GM12878 (cell line): ENCODE measurements at regions of chrX and their contacts with region 1.

Region 1: DNA sequence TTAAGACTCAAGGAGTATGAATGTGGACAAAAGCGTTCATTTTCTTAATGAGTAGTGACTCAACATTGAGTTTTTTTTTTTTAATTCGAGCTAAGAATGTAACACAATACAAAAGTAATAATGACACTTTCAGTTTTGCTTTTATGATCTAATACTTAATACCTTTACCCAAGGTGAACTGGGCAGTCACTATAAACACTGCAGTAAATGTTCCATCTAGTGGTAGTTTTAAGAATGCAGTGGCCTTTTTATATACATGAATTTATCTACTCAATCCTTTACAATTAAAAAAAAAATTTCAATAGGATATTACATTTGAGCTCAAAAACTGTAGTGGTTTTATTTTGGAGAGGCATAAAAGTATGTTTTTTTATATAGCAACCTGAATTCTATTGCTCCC is 33.9 kb downstream of the PDK3 start:
- DNase-seq: no peak
- ATAC-seq: peak; percentile 88
- H3K4me3 ChIP-seq: no peak overlapping the region
- H3K27ac ChIP-seq: no peak overlapping the region
- H3K4me1 ChIP-seq: peaks cover 3% of the 10 kb centered on the region; the same call in 1 of the 2 replicates
- H3K27me3 ChIP-seq: no peaks in the 10 kb centered on the region
- CTCF ChIP-seq: peak; percentile 42 to 55 (median 49); a peak in 5 of 6 replicates
- EP300 ChIP-seq: no peak
- POLR2A ChIP-seq: no peak
- RAD21 ChIP-seq: peak; percentile 60

Region 2: DNA sequence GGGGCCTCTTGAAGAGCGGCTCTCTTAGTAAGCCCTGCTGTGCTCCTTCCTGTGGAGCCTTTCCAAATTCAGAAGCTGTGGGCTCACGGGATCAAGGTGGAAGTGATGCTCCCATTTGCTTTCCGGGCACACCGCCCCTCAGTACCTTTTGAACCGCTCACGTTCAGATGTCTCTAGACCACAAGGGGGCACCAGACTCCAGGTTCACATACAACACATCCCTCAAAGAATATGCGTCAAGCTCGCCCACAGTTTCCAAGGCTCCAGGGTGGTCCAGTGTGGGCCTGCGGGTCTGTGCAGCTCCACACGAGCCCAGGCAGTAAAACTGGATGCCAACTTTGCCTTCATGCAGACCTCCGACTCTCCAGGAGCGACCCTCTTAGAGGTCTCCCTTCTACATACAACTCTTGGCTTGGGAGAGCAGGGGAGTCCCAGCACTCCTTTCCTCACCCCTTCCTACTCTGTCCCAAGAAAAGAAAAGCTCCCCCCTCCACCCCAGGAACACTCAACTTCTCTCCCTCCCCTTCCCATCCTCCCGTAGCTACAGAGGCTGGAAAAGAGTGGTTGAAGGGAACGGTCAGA is 127.5 kb before region 1 on chrX:
- CTCF ChIA-PET with region 1: interaction called, 31 read pairs
- POLR2A ChIA-PET with region 1: no interaction called
- RAD21 ChIA-PET with region 1: no interaction called
- SMC1A ChIA-PET with region 1: no interaction called
- in situ Hi-C with region 1: no loop called
- intact Hi-C with region 1: loop called (anchors 2 kb)
- DNase-seq: peak; percentile 8
- ATAC-seq: peak; percentile 97
- H3K4me3 ChIP-seq: no peak overlapping the region
- H3K27ac ChIP-seq: no peak overlapping the region
- H3K4me1 ChIP-seq: no peaks in the 10 kb centered on the region
- H3K27me3 ChIP-seq: peaks cover 0 to 2% of the 10 kb centered on the region in 2 experiments; a peak in 1 of 4 replicates
- CTCF ChIP-seq: peak; percentile 72 to 79 (median 73)
- EP300 ChIP-seq: no peak
- POLR2A ChIP-seq: no peak
- RAD21 ChIP-seq: peak; percentile 70

Region 3: GRCh38 chrX:24395775-24396174 is 103.2 kb before region 1 on chrX:
- CTCF ChIA-PET with region 1: interaction called, 147 read pairs
- POLR2A ChIA-PET with region 1: interaction called, 10 read pairs
- RAD21 ChIA-PET with region 1: interaction called, 59 read pairs
- SMC1A ChIA-PET with region 1: interaction called, 92 read pairs
- in situ Hi-C with region 1: loop called (anchors 5 kb)
- intact Hi-C with region 1: loop called (anchors 1 kb)
- DNase-seq: peak; percentile 51
- ATAC-seq: peak; percentile 94
- H3K4me3 ChIP-seq: no peak overlapping the region
- H3K27ac ChIP-seq: no peak overlapping the region
- H3K4me1 ChIP-seq: no peaks in the 10 kb centered on the region
- H3K27me3 ChIP-seq: no peaks in the 10 kb centered on the region
- CTCF ChIP-seq: peak; percentile 77 to 91 (median 85)
- EP300 ChIP-seq: no peak
- POLR2A ChIP-seq: no peak
- RAD21 ChIP-seq: peak; percentile 98

Region 4: DNA sequence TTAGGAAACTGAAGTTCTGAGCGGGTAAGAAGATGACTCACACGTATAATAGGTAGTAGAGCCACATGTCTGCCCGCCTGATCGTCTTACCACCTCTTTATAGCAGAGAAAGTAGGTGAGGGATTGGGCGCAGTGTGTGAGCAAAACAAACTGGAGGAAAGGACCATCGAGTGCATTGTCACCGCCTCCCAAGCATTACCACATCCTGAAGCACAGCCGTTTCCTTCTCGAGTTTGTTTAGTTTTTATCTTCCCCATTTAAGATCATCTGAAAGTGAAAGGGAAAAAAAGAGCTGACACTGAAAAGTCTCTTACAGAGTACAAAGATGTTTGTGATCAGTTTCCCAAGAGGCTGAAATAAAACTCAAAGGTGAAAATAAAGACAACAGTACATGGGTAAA is 19.1 kb before region 1 on chrX:
- CTCF ChIA-PET with region 1: interaction called, 5 read pairs
- POLR2A ChIA-PET with region 1: no interaction called
- RAD21 ChIA-PET with region 1: interaction called, 9 read pairs
- SMC1A ChIA-PET with region 1: interaction called, 27 read pairs
- in situ Hi-C with region 1: no loop called
- intact Hi-C with region 1: no loop called
- DNase-seq: peak; percentile 81
- ATAC-seq: peak; percentile 97
- H3K4me3 ChIP-seq: peak overlapping the region; percentile 42; the same call in 1 of the 2 replicates
- H3K27ac ChIP-seq: peak overlapping the region; percentile 80
- H3K4me1 ChIP-seq: no peaks in the 10 kb centered on the region
- H3K27me3 ChIP-seq: no peaks in the 10 kb centered on the region
- CTCF ChIP-seq: no peak
- EP300 ChIP-seq: no peak
- POLR2A ChIP-seq: peak; percentile 70
- RAD21 ChIP-seq: no peak